Endothelial cell of umbilical vein (primary cell): ENCODE measurements at regions of chr17 and their contacts with region 1.

Region 1: DNA sequence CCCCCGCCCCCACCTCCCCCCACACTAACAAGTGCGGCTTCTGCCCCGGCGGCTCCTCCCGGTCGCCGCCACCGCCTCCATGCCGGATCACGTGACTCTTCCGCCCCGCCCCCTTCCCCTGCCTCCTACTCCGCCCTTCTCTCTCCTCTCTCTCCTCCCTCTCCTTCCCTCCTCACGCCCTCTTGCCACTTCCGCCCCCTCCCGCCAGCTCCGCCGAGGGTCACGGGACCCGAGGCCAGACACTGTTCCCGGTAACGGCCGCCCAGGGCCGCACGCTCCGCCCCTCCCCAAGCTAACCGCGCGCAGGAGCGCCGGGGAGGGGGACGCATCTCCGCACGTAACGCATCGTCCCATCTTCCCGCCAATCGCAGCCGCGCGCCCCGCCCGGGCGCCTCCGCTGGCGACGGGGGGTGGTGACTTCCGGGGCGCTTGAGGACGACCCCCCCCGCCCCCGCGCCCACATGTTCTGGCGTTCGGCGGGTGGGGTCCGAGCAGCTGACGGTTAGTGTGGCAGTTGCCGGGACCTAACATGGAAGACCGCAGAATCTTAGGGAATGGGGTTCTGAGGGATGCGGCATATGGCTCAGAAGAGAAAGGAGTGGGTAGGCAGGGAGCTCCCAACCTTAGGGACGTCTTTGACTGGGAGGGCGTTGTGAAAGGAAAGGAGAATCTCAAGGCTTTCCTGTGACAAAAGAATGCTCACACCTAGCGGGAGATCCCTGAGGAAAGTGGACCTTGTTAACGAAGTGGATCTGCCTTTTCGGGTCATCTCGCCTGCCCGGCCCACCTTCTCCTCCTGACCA is at the start of gene USP32:
- DNase-seq: peak; percentile 97
- H3K4me3 ChIP-seq: peak within 1 kb of the TSS; percentile 59 to 93 (median 88)
- H3K27ac ChIP-seq: peak within 1 kb of the TSS; percentile 82
- H3K4me1 ChIP-seq: peaks cover 22% of the 10 kb centered on the region
- H3K27me3 ChIP-seq: no peaks in the 10 kb centered on the region
- CTCF ChIP-seq: peak in 1 of 2 donors; percentile 20
- POLR2A ChIP-seq: no peak
- total RNA-seq, gene USP32: 48.5 and 52.9 TPM in 2 replicates

Region 2: GRCh38 chr17:60142872-60143499 is 249.3 kb before region 1 on chr17:
- CTCF ChIA-PET with region 1: interaction called, 3 read pairs
- POLR2A ChIA-PET with region 1: no interaction called
- dilution Hi-C with region 1: no loop called
- intact Hi-C with region 1: loop called (anchors 10 kb)
- DNase-seq: peak; percentile 89
- H3K4me3 ChIP-seq: no peak overlapping the region
- H3K27ac ChIP-seq: no peak overlapping the region
- H3K4me1 ChIP-seq: peaks cover 19% of the 10 kb centered on the region
- H3K27me3 ChIP-seq: peaks cover 64 to 66% of the 10 kb centered on the region in 2 experiments
- CTCF ChIP-seq: peak; percentile 83 to 84
- POLR2A ChIP-seq: no peak

Region 3: DNA sequence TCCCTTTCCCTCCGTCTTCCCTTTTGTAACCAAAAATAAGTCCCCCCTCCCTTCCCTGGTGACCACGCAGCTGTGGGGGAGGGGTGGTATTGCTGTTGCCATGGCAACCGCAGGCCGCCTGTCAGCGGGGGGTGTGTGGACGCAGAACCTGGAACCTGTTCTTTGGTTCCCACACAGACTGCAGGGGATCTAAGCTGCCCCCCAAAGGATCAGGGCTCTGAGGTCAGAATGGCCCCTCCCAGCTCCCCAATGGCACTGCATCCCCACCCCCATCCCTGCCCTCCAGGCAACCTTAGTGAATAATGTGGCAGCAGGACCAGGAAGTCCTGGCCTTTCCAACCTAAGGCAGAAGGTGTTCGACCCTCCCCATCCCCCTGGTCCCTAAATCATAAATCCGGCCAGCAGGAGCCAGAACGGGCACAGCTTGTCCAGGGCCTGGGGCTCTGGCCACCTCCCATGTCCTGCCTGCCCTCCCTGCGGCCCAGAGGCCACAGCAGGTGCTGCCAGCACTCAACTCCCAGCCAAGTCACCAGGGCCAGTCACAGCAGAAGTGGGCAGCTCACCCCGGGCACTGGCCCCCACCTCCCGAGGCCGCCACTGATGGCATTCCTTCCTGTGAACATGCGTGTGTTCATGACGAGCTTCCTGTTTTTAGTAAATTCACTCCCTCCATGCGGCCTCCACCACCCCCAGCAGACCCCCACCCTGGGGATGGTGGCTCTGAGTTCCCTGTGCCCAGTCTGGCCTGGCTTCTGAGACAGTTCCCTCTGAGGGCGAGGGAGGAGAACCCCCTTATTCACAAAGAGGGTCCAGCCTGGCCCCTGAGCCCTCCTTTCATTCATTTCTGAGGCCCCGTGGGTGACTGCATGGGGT is 230.3 kb before region 1 on chr17:
- CTCF ChIA-PET with region 1: no interaction called
- POLR2A ChIA-PET with region 1: no interaction called
- dilution Hi-C with region 1: no loop called
- intact Hi-C with region 1: no loop called
- DNase-seq: peak; percentile 43
- H3K4me3 ChIP-seq: no peak overlapping the region
- H3K27ac ChIP-seq: no peak overlapping the region
- H3K4me1 ChIP-seq: peaks cover 3% of the 10 kb centered on the region
- H3K27me3 ChIP-seq: no peaks in the 10 kb centered on the region
- CTCF ChIP-seq: no peak
- POLR2A ChIP-seq: no peak

Region 4: GRCh38 chr17:60231234-60231633 is 161.0 kb before region 1 on chr17:
- CTCF ChIA-PET with region 1: interaction called, 17 read pairs
- POLR2A ChIA-PET with region 1: no interaction called
- dilution Hi-C with region 1: no loop called
- intact Hi-C with region 1: loop called (anchors 5 kb)
- DNase-seq: peak; percentile 45
- H3K4me3 ChIP-seq: no peak overlapping the region
- H3K27ac ChIP-seq: no peak overlapping the region
- H3K4me1 ChIP-seq: no peaks in the 10 kb centered on the region
- H3K27me3 ChIP-seq: no peaks in the 10 kb centered on the region
- CTCF ChIP-seq: peak; percentile 22 to 30
- POLR2A ChIP-seq: no peak

Region 5: DNA sequence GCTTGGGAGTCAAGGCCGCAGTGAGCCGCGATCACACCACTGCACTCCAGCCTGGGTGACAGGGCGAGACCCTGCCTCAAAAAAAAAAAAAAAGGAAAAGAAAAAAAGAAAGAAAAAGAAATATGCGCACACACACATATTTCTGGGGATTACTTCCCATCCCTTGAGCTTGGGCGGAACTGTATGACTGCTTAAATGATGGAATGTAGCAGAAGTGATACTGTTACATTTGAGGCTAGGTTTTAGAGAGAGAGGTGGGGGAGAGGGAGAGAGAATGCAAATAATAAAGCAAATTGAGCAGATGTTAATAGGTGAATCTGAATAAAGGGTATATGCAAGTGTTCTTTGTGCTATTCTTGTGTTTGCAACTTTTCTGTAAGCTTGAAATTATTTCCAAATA is 11.7 kb after region 1 on chr17:
- CTCF ChIA-PET with region 1: interaction called, 9 read pairs
- POLR2A ChIA-PET with region 1: interaction called, 10 read pairs
- dilution Hi-C with region 1: no loop called
- intact Hi-C with region 1: no loop called
- DNase-seq: no peak
- H3K4me3 ChIP-seq: no peak overlapping the region
- H3K27ac ChIP-seq: no peak overlapping the region
- H3K4me1 ChIP-seq: no peaks in the 10 kb centered on the region
- H3K27me3 ChIP-seq: no peaks in the 10 kb centered on the region
- CTCF ChIP-seq: no peak
- POLR2A ChIP-seq: no peak

Region 6: DNA sequence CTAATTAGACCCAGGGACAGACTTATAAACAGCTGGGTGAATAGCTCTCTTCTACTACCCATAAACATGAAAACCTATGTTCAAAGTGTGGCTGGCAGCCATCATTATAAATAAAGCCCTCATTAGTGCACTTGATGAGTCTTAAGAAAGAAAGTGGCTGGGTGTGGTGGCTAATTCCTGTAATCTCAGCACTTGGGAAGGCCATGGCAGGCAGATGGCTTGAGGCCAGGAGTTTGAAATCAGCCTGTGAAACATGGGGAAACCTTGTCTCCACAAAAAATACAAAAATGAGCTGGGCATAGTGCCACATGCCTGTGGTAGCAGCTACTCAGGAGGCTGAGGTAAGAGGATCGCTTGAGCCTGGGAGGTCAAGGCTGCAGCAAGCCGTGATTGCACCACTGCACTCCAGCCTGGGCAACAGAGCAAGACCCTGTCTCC is 162.1 kb after region 1 on chr17:
- CTCF ChIA-PET with region 1: no interaction called
- POLR2A ChIA-PET with region 1: no interaction called
- dilution Hi-C with region 1: no loop called
- intact Hi-C with region 1: no loop called
- DNase-seq: no peak
- H3K4me3 ChIP-seq: no peak overlapping the region
- H3K27ac ChIP-seq: no peak overlapping the region
- H3K4me1 ChIP-seq: no peaks in the 10 kb centered on the region
- H3K27me3 ChIP-seq: no peaks in the 10 kb centered on the region
- CTCF ChIP-seq: no peak
- POLR2A ChIP-seq: no peak

Region 7: DNA sequence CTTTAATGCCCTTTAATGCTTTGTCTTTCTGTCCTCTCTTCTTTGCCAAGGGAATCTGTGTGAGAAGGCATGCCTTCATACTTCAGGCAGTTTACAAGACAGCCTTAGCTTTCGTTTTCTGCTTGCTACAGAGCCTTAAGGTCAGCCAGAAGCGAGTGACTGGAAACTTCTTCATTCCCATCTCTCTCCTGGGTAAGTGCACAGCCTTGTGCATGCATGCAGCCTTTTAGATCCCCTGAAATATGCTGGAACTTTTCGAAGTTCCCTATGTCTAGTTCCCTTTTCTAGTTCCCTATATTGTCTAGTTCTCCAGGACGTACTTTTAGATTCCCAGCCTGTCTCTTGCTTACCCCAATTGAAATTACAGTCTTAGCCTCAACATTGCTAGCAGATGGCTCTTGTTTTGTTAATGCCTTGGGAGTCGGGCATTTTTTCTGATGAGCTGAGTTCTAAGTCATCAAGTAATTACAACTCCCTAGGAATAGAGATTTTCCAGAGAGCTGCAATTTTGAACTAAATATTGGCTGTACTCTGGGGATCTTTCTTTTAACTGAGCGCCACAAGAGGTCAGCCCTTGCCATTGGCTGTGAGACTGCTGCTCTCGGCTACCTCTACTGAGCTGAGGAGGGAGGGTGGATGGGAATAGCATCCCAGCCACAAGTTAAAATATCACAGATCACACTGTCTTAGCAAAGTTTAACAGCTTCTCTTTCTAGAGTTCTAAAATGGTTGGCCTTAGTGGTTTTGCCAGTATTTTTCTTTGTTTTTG is 185.1 kb after region 1 on chr17:
- CTCF ChIA-PET with region 1: no interaction called
- POLR2A ChIA-PET with region 1: no interaction called
- dilution Hi-C with region 1: no loop called
- intact Hi-C with region 1: loop called (anchors 1 kb)
- DNase-seq: peak; percentile 67
- H3K4me3 ChIP-seq: peak overlapping the region in 2 of 3 experiments; percentile 5 to 10
- H3K27ac ChIP-seq: peak overlapping the region; percentile 3
- H3K4me1 ChIP-seq: peaks cover 21% of the 10 kb centered on the region
- H3K27me3 ChIP-seq: no peaks in the 10 kb centered on the region
- CTCF ChIP-seq: no peak
- POLR2A ChIP-seq: no peak